Dorsolateral prefrontal cortex (tissue), 120 donors: ENCODE measurements at regions of chr20 and their contacts with region 1.

Region 1: GRCh38 chr20:34075647-34076046 is 36.4 kb downstream of the EIF2S2 start:
- DNase-seq: no peak
- H3K4me3 ChIP-seq: no peak overlapping the region
- H3K27ac ChIP-seq: no peak overlapping the region
- H3K27me3 ChIP-seq: no peaks in the 10 kb centered on the region
- CTCF ChIP-seq: peak in 2 of 56 donors; percentile 5 to 21

Region 2: DNA sequence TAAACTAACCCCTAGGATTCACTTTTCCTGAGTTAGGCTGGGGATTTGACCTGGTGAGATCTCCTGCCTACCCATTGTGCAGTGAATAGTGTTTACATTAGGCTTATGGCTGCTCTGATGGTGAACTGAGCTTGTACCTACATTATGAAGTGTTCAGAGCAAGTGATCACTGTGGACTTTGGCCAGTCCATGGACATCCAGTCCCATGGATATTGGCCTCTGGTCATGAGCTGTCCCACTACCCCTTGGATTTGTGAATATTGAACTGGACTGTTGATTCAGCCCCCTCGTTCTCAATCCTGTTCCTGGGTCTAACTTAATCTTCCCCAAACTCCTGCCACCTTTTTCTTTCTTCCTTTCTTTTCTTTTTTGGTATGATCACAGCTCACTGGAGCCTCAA is 179.3 kb after region 1 on chr20:
- intact Hi-C with region 1: loop called in 1 of 2 experiments (anchors 5 kb)
- DNase-seq: no peak
- H3K4me3 ChIP-seq: no peak overlapping the region
- H3K27ac ChIP-seq: no peak overlapping the region
- H3K27me3 ChIP-seq: no peaks in the 10 kb centered on the region
- CTCF ChIP-seq: no peak